ENCODE measurements at regions of chr17 and their contacts with region 1.

Region 1: GRCh38 chr17:76658001-76658662 is 14.6 kb upstream of the ST6GALNAC1 start:
- DNase-seq: no peak
- ATAC-seq: peak; percentile 61
- H3K4me3 Mint-ChIP-seq: no peak overlapping the region
- H3K27ac Mint-ChIP-seq: peak overlapping the region; percentile 57
- H3K4me1 Mint-ChIP-seq: peaks cover 19% of the 10 kb centered on the region
- H3K27me3 Mint-ChIP-seq: no peaks in the 10 kb centered on the region

Region 2: GRCh38 chr17:76623271-76624146 is 34.6 kb before region 1 on chr17:
- POLR2A ChIA-PET with region 1: no interaction called
- DNase-seq: peak; percentile 82
- ATAC-seq: peak; percentile 90
- H3K4me3 Mint-ChIP-seq: no peak overlapping the region
- H3K27ac Mint-ChIP-seq: no peak overlapping the region
- H3K4me1 Mint-ChIP-seq: peaks cover 7% of the 10 kb centered on the region
- H3K27me3 Mint-ChIP-seq: peaks cover 18% of the 10 kb centered on the region

Region 3: GRCh38 chr17:76671123-76671911 is 13.2 kb after region 1 on chr17:
- POLR2A ChIA-PET with region 1: interaction called, 13 read pairs
- DNase-seq: peak; percentile 97
- ATAC-seq: peak; percentile 99
- H3K4me3 Mint-ChIP-seq: peak overlapping the region; percentile 89
- H3K27ac Mint-ChIP-seq: peak overlapping the region; percentile 96
- H3K4me1 Mint-ChIP-seq: peaks cover 32% of the 10 kb centered on the region
- H3K27me3 Mint-ChIP-seq: peaks cover 2% of the 10 kb centered on the region

Measured in activated naive CD8-positive, alpha-beta T cell treated with anti-CD3 and anti-CD28 coated beads, Interleukin-2, amount 10 ng/mL, durations not matched to agents 7 days and 5 days (primary cell).